Activated naive CD4-positive, alpha-beta T cell treated with anti-CD3 and anti-CD28 coated beads for 36 hours (primary cell): ENCODE measurements at regions of chr16 and their contacts with region 1.

Region 1: DNA sequence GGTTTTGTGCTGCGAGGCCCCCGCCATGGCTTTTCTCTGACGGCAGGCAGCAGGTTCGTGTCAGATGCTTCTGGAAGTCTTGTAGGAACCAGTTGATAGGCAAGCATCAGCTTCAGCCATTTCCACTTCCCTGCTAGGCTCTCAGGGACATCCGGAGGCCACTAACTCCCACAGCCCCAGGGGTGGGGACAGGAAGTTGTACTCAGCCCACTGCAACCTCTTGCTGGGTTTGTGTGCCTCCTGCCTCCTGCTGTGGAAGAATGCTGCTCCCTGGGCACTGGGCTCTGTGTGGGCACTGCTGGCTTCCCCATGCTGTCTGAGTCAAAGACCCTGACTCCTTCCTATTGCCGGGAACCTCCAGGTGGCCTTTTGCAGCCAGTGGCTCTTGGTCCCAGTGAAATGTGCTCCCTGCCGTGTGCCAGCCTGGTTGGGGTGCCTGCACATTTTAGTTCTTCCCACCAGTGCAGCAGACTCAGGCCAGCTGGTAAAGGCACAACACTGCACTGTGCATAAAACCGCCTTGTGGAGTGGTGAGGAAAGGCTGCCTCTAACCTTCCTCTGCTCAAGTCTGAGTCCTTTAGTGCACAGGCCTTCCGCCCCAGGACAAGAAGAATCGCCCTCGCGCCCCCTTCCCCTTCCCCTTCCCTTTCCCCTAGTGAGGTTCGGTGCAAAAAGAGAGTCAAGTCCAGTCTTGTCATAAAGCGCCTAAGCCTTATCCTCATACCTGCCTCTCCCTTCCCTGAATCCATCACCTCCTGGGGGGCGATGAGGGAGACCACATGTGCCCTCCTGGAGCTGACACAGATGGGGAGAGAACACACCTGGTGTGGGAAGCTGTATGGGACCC is 16.6 kb downstream of the LDHD start:
- DNase-seq: peak; percentile 74
- H3K4me3 Mint-ChIP-seq: no peak overlapping the region
- H3K27ac Mint-ChIP-seq: peak overlapping the region; percentile 68
- H3K4me1 Mint-ChIP-seq: peaks cover 39% of the 10 kb centered on the region
- H3K27me3 Mint-ChIP-seq: no peaks in the 10 kb centered on the region

Region 2: DNA sequence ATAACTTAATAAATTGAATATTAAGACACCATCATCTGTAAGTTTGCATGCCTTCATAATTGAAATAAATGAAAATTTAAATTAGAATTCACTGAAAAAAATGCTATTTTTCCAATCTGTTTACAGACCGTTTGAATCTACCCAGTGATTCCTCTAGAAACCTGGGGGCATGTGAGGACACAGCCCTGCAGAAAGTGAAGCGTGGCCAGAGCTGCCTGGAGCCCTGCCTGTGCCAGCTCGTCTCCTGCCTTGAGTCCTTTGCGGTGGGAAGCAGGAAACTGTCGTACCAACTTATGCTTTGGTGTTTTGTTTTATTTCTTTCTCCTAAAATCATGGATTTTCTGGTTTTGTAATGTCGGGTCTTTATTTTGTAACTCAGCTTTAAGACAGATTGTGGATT is 257.6 kb before region 1 on chr16:
- CTCF ChIA-PET with region 1: no interaction called
- intact Hi-C with region 1: no loop called
- DNase-seq: no peak
- H3K4me3 Mint-ChIP-seq: no peak overlapping the region
- H3K27ac Mint-ChIP-seq: no peak overlapping the region
- H3K4me1 Mint-ChIP-seq: no peaks in the 10 kb centered on the region
- H3K27me3 Mint-ChIP-seq: no peaks in the 10 kb centered on the region

Region 3: DNA sequence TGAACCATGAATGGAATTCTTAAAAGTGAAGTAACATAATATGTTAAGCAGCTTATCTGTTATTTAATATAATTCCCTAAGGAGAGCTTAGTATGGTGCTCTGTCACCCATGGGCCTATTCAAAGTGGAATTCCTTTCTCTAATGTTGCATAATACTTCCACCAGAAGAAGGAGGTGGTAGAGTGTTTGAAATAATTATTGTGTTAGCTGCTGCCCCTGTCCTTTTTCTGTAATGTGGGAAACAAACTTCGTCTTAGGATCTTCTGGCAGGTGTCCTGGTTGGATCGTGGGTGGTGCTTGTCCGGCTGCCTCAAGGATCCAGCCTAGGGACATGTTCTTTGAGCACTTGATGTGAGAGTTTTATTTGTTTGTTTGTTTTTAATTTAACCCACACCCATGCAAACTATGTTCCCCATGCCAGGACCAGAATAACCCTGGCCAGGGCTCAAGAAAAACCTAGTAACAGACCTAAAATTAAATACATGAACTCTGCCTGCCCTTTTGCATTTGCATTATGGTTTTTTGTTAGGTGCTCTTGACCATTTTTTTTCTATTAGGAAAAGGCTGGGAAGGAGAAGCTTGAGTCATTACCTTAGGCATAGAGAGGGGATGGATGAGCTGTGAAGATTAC is 55.1 kb before region 1 on chr16:
- CTCF ChIA-PET with region 1: no interaction called
- intact Hi-C with region 1: no loop called
- DNase-seq: no peak
- H3K4me3 Mint-ChIP-seq: no peak overlapping the region
- H3K27ac Mint-ChIP-seq: no peak overlapping the region
- H3K4me1 Mint-ChIP-seq: peaks cover 5% of the 10 kb centered on the region
- H3K27me3 Mint-ChIP-seq: no peaks in the 10 kb centered on the region

Region 4: GRCh38 chr16:75064403-75065148 is 35.4 kb before region 1 on chr16:
- CTCF ChIA-PET with region 1: interaction called, 7 read pairs
- intact Hi-C with region 1: loop called (anchors 2 kb)
- DNase-seq: peak; percentile 65
- H3K4me3 Mint-ChIP-seq: peak overlapping the region; percentile 54
- H3K27ac Mint-ChIP-seq: no peak overlapping the region
- H3K4me1 Mint-ChIP-seq: peaks cover 25% of the 10 kb centered on the region
- H3K27me3 Mint-ChIP-seq: no peaks in the 10 kb centered on the region

Region 5: DNA sequence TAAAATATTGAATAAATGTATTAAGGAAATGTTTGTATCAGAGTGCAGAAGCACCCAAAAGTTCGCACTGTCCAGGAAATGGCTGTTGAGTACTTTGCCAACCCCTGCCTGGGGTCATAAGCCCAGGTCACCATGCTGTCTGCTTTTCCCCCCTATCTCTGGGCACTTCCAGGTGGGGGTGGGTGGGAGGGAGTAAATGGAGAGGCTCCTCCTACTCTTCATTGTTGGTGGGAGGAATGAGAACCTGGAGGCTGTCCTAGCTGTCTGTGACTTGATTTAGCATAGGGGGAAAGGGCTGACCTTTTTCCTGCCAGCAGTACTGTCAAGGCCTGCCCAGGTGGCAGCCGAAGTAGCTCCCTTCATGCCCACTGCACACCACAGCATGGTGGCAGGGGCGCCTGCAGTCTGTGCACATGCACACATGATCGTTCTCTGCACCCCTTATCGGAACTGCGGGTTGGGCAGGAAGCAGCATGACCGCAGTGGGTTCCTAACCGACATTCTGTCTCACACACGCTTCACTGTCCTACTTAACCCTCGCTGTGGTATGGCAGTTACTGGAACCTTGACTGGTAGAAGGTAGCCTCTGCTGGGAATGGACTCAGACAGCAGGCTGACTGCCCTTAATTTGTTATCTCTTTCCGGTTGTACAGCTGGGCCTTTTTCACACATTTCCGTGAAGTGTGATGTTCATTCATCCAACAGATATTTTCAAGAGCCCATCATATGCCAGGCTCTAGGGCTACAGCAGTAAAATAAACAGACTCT is 24.9 kb before region 1 on chr16:
- CTCF ChIA-PET with region 1: interaction called, 4 read pairs
- intact Hi-C with region 1: loop called (anchors 1 kb)
- DNase-seq: peak; percentile 93
- H3K4me3 Mint-ChIP-seq: peak overlapping the region; percentile 34
- H3K27ac Mint-ChIP-seq: peak overlapping the region; percentile 85
- H3K4me1 Mint-ChIP-seq: peaks cover 40% of the 10 kb centered on the region
- H3K27me3 Mint-ChIP-seq: no peaks in the 10 kb centered on the region